Endothelial cell of umbilical vein (primary cell): ENCODE measurements at regions of chr16 and their contacts with region 1.

Region 1: GRCh38 chr16:72942021-72942420 is 105.9 kb downstream of the ZFHX3 start:
- DNase-seq: peak; percentile 28
- H3K4me3 ChIP-seq: no peak overlapping the region
- H3K27ac ChIP-seq: no peak overlapping the region
- H3K4me1 ChIP-seq: peaks cover 12% of the 10 kb centered on the region
- H3K27me3 ChIP-seq: no peaks in the 10 kb centered on the region
- CTCF ChIP-seq: no peak
- POLR2A ChIP-seq: no peak

Region 2: GRCh38 chr16:72876221-72876620 is 65.8 kb before region 1 on chr16:
- CTCF ChIA-PET with region 1: no interaction called
- POLR2A ChIA-PET with region 1: no interaction called
- dilution Hi-C with region 1: no loop called
- intact Hi-C with region 1: loop called (anchors 5 kb)
- DNase-seq: peak; percentile 67
- H3K4me3 ChIP-seq: no peak overlapping the region
- H3K27ac ChIP-seq: peak overlapping the region; percentile 92
- H3K4me1 ChIP-seq: peaks cover 31% of the 10 kb centered on the region
- H3K27me3 ChIP-seq: no peaks in the 10 kb centered on the region
- CTCF ChIP-seq: no peak
- POLR2A ChIP-seq: no peak